ACHN (cell line): ENCODE measurements at regions of chr16 and their contacts with region 1.

Region 1: GRCh38 chr16:35751191-35751941 is 2292.0 kb downstream of the TP53TG3F start:
- DNase-seq: no peak

Region 2: GRCh38 chr16:35516551-35516950 is 234.8 kb before region 1 on chr16:
- in situ Hi-C with region 1: no loop called
- DNase-seq: no peak

Region 3: DNA sequence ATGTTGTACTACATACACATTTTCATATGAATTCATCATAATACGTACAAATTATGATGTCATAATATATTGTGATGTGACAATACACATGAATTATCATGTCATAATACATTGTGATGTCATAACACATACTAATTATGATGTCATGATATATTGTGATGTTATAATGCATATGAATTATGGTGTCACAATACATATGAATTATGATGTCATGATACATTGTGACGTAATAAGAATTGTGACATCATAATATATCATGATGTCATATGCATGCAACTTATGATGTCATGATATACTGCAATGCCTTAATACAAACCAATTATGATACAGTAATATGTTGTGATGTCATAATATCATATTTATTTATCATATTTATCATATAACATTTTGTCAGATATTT is 217.7 kb before region 1 on chr16:
- in situ Hi-C with region 1: no loop called
- DNase-seq: peak; percentile 7

Region 4: GRCh38 chr16:35631261-35631945 is 120.0 kb before region 1 on chr16:
- in situ Hi-C with region 1: loop called (anchors 25 kb)
- DNase-seq: peak; percentile 63